ENCODE measurements at regions of chr10 and their contacts with region 1.

Region 1: DNA sequence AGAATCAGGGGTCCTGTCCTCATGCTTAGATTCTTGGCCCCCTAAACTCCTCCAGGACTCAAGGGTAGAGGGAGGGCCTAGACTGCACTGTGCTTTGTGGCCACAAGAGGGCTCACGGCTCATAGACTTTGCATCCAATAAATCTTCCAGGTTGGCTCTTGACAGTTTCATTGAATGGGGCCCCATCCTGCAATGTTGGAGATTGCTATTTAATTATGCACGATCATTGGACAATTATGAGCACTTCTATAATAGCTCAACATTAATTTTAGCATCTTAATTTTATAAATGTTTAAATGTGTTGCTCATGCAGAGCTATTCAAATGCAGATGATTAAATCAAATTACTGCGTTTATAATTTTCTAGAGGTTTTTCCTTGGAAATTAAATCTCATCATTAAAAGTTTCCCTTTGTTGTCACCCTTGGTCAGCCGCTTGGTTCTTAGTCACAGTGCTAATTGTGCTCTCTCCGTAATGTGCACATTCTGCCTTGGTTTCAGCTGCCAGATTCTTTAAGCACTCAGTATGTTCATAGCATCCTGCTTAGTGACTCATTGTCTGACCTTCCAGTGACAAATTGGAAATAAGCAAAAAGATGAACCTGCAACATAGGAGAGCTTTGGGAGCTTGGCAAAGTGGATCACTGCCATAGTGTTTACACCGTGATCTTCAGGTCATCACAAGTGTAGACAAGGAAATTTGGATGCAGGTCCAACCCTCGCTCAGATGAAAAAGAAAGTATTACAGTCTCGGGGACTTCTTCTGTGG is 33.4 kb upstream of the PLPP4 start:
- DNase-seq: no peak
- H3K4me3 ChIP-seq: peak overlapping the region; percentile 24
- CTCF ChIP-seq: peak; percentile 87

Region 2: GRCh38 chr10:120403109-120403508 is 20.5 kb before region 1 on chr10:
- CTCF ChIA-PET with region 1: interaction called, 14 read pairs
- POLR2A ChIA-PET with region 1: no interaction called
- DNase-seq: no peak
- H3K4me3 ChIP-seq: no peak overlapping the region
- CTCF ChIP-seq: no peak

Region 3: GRCh38 chr10:120460776-120461175 is 37.2 kb after region 1 on chr10:
- CTCF ChIA-PET with region 1: interaction called, 15 read pairs
- POLR2A ChIA-PET with region 1: interaction called, 3 read pairs
- DNase-seq: peak; percentile 76
- H3K4me3 ChIP-seq: no peak overlapping the region
- CTCF ChIP-seq: no peak

Region 4: DNA sequence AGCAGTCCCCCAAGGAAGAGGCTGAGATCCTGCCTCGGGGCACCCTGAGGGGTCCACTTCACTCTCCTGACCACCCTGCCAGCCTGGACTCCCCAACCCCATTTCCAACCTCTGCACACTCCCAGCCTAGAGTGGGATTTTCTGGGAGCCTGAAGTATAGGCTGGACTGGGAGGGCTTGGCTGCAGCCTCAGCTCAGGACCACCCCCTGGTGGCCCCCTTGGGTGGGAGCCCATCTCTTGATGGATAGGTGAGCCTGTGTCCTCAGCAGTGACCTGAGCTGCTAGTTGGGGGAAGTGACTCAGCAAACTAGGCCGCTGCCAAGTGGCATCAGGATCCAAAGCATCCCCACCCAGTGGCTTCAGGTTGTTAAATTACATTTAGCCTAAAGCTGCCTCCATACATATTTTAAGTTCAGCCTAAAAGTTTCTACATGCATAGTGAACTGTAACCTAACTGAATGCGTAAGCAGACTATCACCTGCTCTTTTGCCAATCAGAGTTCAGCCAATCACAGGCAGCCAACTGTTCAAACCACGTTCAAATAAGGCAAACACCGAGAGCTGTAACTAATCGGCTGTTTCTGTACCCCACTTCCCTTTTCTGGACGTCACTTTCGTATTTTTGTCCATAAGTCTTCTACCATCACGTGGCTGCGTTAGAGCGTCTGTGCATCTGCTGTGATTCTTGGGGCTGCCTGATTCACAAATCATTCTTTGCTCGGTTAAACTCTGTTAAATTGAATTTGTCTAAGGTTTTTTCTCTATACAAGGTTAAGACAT is 177.4 kb after region 1 on chr10:
- CTCF ChIA-PET with region 1: interaction called, 16 read pairs
- POLR2A ChIA-PET with region 1: no interaction called
- DNase-seq: no peak
- H3K4me3 ChIP-seq: no peak overlapping the region
- CTCF ChIP-seq: peak; percentile 67

Region 5: DNA sequence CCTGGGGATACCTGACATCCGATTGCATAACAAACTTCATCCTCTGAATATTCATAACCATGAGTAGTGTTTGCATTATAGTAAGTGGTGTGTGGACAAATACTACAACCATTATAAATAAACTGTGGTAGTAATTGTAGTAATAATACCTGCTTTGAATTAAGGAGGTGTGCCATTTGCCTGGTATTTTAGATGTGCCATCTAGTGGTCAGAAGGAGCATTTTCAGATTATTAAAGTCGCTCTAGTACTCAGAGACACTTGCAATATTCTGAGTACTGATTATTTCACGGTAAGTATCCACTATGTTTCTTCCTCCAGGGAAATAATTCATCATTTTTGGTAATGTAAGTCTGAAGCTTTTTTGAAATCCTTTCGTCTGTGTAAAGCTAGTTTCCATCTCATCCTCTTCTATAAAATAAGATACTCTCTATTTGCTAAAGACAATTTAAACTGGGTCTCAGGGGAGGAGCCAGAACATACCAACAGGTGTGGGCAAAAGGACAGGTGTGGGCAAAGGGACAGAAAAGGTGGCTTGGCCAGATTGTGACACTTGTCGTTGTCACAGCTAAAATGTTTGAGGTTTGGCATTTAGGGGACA is 312.3 kb after region 1 on chr10:
- CTCF ChIA-PET with region 1: interaction called, 39 read pairs
- POLR2A ChIA-PET with region 1: no interaction called
- DNase-seq: no peak
- H3K4me3 ChIP-seq: no peak overlapping the region
- CTCF ChIP-seq: peak; percentile 40

Region 6: DNA sequence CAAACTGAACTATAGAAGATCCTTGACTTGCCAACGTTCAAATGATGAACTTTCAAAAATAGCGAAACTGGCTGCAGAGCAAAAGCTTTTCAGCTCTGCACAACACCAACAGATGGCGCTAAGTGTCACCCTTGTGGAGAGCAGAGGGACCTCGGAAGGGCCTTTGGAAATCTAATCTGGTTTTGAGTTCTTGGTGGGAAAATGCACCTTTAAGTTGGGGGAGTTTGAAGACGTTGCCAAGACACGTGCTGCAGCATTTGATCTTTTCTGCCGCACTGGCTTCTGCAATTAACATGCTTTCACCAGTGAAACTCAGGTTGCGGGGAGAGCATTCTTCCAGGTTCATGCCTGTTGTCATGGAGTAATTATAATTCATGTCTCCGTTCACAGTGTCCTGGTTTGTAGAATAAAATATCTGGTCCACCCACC is 401.3 kb after region 1 on chr10:
- CTCF ChIA-PET with region 1: no interaction called
- POLR2A ChIA-PET with region 1: no interaction called
- DNase-seq: no peak
- H3K4me3 ChIP-seq: no peak overlapping the region
- CTCF ChIP-seq: peak; percentile 26

Measured in AG04449 (cell line).